ENCODE measurements at regions of chr4 and their contacts with region 1.

Region 1: DNA sequence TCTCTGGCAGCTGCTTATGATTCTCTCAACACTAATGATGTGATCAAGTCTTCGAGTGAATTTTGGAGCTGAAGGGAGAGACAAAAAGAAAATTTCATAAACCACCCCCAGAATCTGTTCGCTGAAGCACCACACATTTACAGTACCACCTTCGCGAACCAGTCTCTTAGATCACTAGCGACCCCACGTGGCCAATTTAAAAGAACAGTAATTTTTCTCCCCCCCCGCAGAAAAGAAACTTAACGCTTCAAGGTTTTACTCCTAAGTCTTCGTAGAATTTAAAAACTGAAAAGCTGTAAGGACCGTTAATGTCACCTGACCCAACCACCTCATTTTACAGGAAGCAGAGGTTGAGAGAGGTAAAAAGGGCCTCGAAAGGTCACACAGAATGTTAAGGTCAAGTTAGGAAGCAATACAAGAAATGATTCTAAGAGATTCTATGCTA is 187.5 kb downstream of the QDPR start:
- DNase-seq: peak; percentile 22
- CTCF ChIP-seq: no peak

Region 2: GRCh38 chr4:16794816-16795445 is 529.5 kb before region 1 on chr4:
- CTCF ChIA-PET with region 1: interaction called, 18 read pairs
- POLR2A ChIA-PET with region 1: no interaction called
- DNase-seq: peak; percentile 24
- CTCF ChIP-seq: peak; percentile 37

Region 3: GRCh38 chr4:17232566-17233253 is 91.7 kb before region 1 on chr4:
- CTCF ChIA-PET with region 1: no interaction called
- POLR2A ChIA-PET with region 1: no interaction called
- DNase-seq: no peak
- CTCF ChIP-seq: no peak

Region 4: DNA sequence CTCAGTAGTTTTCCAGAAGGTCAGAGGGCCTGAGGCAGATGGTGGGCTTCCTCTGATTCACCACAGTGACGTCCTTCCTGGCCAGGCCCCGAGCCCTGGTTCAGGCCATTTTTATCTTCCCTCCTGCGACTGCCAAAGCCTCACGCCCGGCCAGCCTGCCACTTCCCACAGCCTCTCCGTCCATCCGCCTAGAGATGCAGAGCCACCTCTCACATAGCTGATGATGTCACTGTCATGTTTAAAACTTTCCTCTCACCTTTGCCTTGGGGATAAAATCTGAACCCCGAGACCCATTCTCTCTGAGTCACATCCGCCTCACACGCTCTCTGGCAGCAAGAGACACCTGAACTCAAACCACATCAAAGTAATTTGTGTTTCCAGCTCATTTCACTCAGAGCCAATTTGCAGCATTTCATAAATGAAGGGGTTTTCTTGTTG is 12.1 kb after region 1 on chr4:
- CTCF ChIA-PET with region 1: interaction called, 10 read pairs
- POLR2A ChIA-PET with region 1: interaction called, 4 read pairs
- DNase-seq: peak; percentile 67
- CTCF ChIP-seq: no peak

Region 5: DNA sequence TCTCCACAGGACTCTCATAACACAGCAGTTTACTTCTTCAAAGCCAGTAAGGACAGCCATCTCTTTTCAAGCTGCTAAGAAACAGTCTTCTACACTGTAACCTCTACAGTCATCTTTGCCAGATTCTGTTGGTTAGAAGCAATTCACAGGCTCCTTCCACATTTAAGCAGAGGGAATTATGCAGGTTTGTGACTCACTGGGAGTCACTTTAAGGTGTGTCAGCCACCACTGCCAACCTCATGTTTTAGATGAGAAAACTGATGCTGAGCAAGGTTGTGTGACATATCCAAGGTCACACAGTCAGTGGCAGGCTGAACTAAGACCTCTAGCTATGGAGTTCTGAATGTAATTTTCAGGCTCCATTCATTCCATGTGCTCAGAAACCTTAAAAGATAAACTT is 44.0 kb after region 1 on chr4:
- CTCF ChIA-PET with region 1: no interaction called
- POLR2A ChIA-PET with region 1: no interaction called
- DNase-seq: no peak
- CTCF ChIP-seq: no peak

Region 6: DNA sequence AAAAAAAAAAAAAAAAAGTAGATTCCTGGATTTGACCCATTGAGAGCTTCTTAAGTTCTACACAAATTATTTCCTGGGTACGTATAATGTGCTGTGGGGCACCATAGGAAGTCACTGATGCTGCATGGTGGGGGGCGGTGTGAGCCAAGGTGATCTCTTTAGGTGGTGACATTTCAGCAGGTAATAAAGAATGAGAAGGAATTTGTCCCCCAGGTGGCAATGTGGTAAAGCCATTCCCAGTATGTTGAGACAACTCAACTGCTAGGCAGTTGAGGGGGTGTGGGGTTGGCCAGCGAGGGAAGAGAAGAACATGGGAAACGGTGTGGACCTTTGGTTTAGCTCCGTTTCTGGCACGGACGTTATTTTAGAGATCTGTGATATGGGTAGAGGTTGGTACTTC is 422.6 kb after region 1 on chr4:
- CTCF ChIA-PET with region 1: no interaction called
- POLR2A ChIA-PET with region 1: no interaction called
- DNase-seq: no peak
- CTCF ChIP-seq: no peak